ENCODE measurements at regions of chr13 and their contacts with region 1.

Region 1: GRCh38 chr13:98576963-98577822 is at the start of gene STK24:
- DNase-seq: peak; percentile 69 to 85 (median 81)
- H3K4me3 ChIP-seq: peak within 1 kb of the TSS; percentile 99
- H3K27ac ChIP-seq: peak within 1 kb of the TSS; percentile 94 to 97
- H3K4me1 ChIP-seq: peaks cover 4% of the 10 kb centered on the region
- H3K27me3 ChIP-seq: no peaks in the 10 kb centered on the region
- CTCF ChIP-seq: no peak
- EP300 ChIP-seq: no peak
- POLR2A ChIP-seq: no peak
- total RNA-seq, gene STK24: 34.0 to 73.1 (median 60.6) TPM

Region 2: GRCh38 chr13:97975848-97976609 is 601.2 kb before region 1 on chr13:
- intact Hi-C with region 1: loop called in 1 of 4 experiments (anchors 10 kb)
- DNase-seq: peak; percentile 92 to 96 (median 93)
- H3K4me3 ChIP-seq: peak overlapping the region; percentile 72
- H3K27ac ChIP-seq: peak overlapping the region; percentile 92 to 96
- H3K4me1 ChIP-seq: no peaks in the 10 kb centered on the region
- H3K27me3 ChIP-seq: no peaks in the 10 kb centered on the region
- CTCF ChIP-seq: no peak
- EP300 ChIP-seq: no peak
- POLR2A ChIP-seq: peak; percentile 92

Region 3: GRCh38 chr13:98454389-98454881 is 122.8 kb before region 1 on chr13:
- intact Hi-C with region 1: loop called (anchors 5 to 10 kb)
- DNase-seq: peak in 3 of 5 donors; percentile 43 to 61 (median 53)
- H3K4me3 ChIP-seq: no peak overlapping the region
- H3K27ac ChIP-seq: peak overlapping the region in 1 of 2 donors; percentile 52
- H3K4me1 ChIP-seq: peaks cover 10% of the 10 kb centered on the region
- H3K27me3 ChIP-seq: no peaks in the 10 kb centered on the region
- CTCF ChIP-seq: no peak
- EP300 ChIP-seq: no peak
- POLR2A ChIP-seq: no peak

Region 4: GRCh38 chr13:98509271-98510155 is 67.7 kb before region 1 on chr13:
- intact Hi-C with region 1: loop called in 1 of 4 experiments (anchors 5 kb)
- DNase-seq: peak in 1 of 5 donors; percentile 47
- H3K4me3 ChIP-seq: no peak overlapping the region
- H3K27ac ChIP-seq: no peak overlapping the region
- H3K4me1 ChIP-seq: peaks cover 23% of the 10 kb centered on the region
- H3K27me3 ChIP-seq: no peaks in the 10 kb centered on the region
- CTCF ChIP-seq: no peak
- EP300 ChIP-seq: no peak
- POLR2A ChIP-seq: no peak

Region 5: DNA sequence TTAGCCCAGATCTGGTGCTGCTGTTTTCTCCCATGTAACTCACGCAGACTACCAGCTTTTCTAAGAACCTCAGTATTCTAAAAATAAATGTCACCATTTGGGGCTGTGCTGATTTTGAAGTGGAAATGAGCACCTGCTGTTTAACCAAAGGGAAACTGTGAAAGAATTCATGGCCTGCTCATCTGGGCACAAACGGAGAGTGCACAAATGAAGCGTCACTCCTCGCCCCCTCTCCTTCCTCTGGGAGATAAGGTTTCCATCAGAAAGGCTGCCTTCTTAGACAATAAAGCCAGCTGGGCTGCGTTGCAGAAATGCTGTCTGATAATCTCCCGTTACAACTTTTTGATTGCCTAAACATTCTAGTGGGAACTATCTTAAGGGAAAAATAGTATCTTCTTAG is 249.0 kb after region 1 on chr13:
- intact Hi-C with region 1: no loop called
- DNase-seq: no peak
- H3K4me3 ChIP-seq: no peak overlapping the region
- H3K27ac ChIP-seq: no peak overlapping the region
- H3K4me1 ChIP-seq: no peaks in the 10 kb centered on the region
- H3K27me3 ChIP-seq: no peaks in the 10 kb centered on the region
- CTCF ChIP-seq: no peak
- EP300 ChIP-seq: no peak
- POLR2A ChIP-seq: no peak

Region 6: GRCh38 chr13:100088644-100089464 is 1511.7 kb after region 1 on chr13 and contains the start of gene PCCA:
- intact Hi-C with region 1: loop called in 1 of 4 experiments (anchors 5 kb)
- DNase-seq: peak; percentile 94 to 96 (median 95)
- H3K4me3 ChIP-seq: peak within 1 kb of the TSS; percentile 75
- H3K27ac ChIP-seq: peak within 1 kb of the TSS in 1 of 2 donors; percentile 74
- H3K4me1 ChIP-seq: peaks cover 5% of the 10 kb centered on the region
- H3K27me3 ChIP-seq: no peaks in the 10 kb centered on the region
- CTCF ChIP-seq: peak in 1 of 3 donors; percentile 23
- EP300 ChIP-seq: no peak
- POLR2A ChIP-seq: peak; percentile 64
- total RNA-seq, gene PCCA: 43.4 to 62.4 (median 46.5) TPM